ENCODE measurements at regions of chr2 and their contacts with region 1.

Region 1: DNA sequence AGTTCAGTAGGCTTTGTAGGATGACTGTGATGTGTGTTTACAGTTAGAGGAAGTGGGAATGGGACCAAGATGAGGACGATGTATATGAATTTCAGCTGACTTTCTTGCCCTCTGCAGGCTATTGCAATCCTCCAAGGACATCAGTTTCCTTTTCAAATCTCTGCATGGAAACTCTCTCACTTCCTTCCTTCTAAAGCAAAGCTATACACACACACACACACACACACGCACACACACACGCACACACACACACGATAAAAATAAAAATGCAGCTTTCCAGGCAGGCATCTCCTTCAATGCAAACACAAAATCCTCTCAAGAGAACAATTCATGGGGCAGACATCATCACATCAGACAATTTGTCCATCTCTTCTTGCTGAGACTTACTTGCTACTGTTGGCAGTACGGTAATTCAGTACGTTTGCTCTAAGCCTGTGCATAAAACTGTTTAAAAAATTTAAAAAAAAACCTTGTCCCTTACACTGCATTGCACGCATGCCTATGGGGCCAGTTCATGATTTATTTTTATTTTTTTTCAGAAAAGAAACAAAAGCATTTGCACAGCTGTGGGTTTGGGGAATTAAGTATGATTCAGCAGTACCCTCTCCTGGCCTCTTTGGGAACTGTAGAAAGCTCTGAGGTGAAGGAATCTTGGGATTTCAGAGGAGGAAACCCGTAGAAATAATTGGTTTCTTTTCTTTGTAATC is 27.1 kb upstream of the ICOS start:
- DNase-seq: peak in 1 of 5 donors; percentile 25
- ATAC-seq: peak; percentile 79 to 89 (median 87)
- H3K4me3 ChIP-seq: peak overlapping the region in 8 of 12 donors; percentile 14 to 54 (median 35)
- H3K27ac ChIP-seq: peak overlapping the region; percentile 0 to 85 (median 28)
- H3K4me1 ChIP-seq: peaks cover 0 to 30% (median 8%) of the 10 kb centered on the region in 12 donors
- H3K27me3 ChIP-seq: no peaks in the 10 kb centered on the region
- CTCF ChIP-seq: peak; percentile 56 to 91 (median 75)
- POLR2A ChIP-seq: no peak

Region 2: DNA sequence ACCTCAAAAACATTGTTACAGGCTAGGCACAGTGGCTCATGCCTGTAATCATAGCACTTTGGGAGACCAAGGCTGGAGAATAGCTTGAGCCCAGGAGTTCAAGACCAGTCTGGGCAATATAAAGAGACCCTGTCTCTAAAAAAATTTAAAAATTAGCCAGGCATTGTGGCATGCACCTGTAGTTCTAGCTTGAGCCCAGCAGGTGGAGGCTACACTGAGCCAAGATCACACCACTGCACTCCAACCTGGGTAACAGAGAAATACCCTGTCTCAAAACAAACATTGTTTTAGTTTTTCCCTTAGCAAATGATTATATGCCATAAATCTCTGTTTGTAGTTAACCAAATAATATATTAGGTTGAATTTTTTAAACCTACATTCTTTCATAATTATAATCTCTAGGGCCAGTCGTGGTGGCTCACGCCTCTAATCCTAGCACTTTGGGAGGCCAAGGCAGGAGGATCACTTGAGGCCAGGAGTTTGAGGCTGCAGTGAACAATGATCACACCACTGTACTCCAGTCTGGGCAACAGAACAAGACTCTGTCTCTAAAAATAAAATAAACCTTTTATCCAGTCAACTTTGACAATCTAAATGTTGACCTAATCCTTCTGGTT is 683.9 kb before region 1 on chr2:
- intact Hi-C with region 1: loop called in 3 of 10 experiments (anchors 5 to 10 kb)
- DNase-seq: no peak
- ATAC-seq: peak in 2 of 4 donors; percentile 34 to 45
- H3K4me3 ChIP-seq: no peak overlapping the region
- H3K27ac ChIP-seq: no peak overlapping the region
- H3K4me1 ChIP-seq: no peaks in the 10 kb centered on the region
- H3K27me3 ChIP-seq: no peaks in the 10 kb centered on the region
- CTCF ChIP-seq: peak; percentile 42 to 66 (median 54)
- POLR2A ChIP-seq: no peak

Region 3: GRCh38 chr2:203463266-203463678 is 446.1 kb before region 1 on chr2:
- intact Hi-C with region 1: loop called in 1 of 10 experiments (anchors 10 kb)
- DNase-seq: no peak
- ATAC-seq: no peak
- H3K4me3 ChIP-seq: no peak overlapping the region
- H3K27ac ChIP-seq: no peak overlapping the region
- H3K4me1 ChIP-seq: peaks cover 0 to 5% (median 0%) of the 10 kb centered on the region in 12 donors
- H3K27me3 ChIP-seq: no peaks in the 10 kb centered on the region
- CTCF ChIP-seq: no peak
- POLR2A ChIP-seq: no peak

Region 4: DNA sequence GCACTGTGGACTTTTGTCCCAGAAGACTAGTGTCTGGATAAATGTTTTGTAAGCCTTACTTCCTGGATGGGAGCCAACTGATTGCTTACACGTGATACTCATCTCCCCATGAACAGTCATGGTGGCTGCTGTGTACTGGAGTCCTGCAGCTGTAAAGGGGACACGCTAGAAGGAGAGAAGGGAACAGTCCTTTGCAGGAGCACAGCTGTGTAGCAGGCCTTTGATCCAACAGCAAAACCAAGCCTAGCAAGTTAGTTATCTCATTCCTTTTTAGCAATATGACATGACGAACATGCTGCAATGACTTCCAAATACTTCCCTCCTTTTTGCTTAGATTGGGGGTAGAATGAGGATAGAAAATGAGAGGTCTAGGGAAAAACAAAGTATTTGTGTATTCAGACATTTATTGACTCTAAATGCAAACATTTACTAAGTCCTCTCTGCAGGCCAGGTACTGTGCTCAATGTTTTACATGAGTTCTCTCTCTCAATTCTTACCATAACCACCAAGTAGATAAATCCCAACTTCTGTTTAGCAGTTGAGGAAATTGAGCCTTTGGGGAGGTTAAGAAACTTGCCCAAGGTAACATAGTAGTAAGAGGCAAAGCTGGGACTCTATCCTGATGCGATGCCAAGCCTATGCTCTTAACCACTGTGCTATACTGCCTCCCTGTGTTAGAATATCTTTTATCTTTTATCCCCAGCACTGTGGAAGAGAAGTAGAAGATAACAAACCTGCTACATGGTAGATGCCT is 258.4 kb before region 1 on chr2:
- intact Hi-C with region 1: loop called in 1 of 10 experiments (anchors 10 kb)
- DNase-seq: peak in 1 of 5 donors; percentile 23
- ATAC-seq: peak; percentile 71 to 86 (median 80)
- H3K4me3 ChIP-seq: no peak overlapping the region
- H3K27ac ChIP-seq: peak overlapping the region in 11 of 12 donors; percentile 30 to 75 (median 56)
- H3K4me1 ChIP-seq: peaks cover 0 to 37% (median 23%) of the 10 kb centered on the region in 12 donors
- H3K27me3 ChIP-seq: no peaks in the 10 kb centered on the region
- CTCF ChIP-seq: peak in 10 of 12 donors; percentile 22 to 59 (median 38)
- POLR2A ChIP-seq: no peak

Region 5: DNA sequence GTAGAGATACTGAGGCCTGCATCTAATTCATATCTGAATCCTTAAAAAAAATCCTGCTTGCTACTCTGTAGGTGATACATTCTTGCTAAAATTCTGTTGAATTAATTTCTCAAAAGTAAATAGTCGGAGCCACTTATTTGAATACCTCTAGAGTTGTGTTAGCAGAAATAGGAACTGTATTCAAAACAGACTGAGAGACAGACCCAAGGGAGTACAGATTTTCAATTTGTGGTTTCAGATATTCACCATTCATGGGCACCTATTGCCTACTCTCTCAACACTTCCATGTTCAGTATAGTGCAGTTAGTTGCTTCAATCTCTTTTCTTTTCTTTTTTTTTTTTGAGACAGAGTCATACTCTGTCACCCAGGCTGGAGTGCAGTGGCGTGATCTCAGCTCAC is 88.4 kb before region 1 on chr2:
- intact Hi-C with region 1: loop called in 5 of 10 experiments (anchors 5 to 10 kb)
- DNase-seq: no peak
- ATAC-seq: no peak
- H3K4me3 ChIP-seq: no peak overlapping the region
- H3K27ac ChIP-seq: no peak overlapping the region
- H3K4me1 ChIP-seq: peaks cover 0 to 34% (median 2%) of the 10 kb centered on the region in 12 donors
- H3K27me3 ChIP-seq: no peaks in the 10 kb centered on the region
- CTCF ChIP-seq: no peak
- POLR2A ChIP-seq: no peak